PC-3 (cell line): ENCODE measurements at regions of chr10 and their contacts with region 1.

Region 1: GRCh38 chr10:8396675-8397074 is 342.2 kb downstream of the GATA3 start:
- DNase-seq: peak; percentile 31
- ATAC-seq: no peak
- H3K4me3 ChIP-seq: no peak overlapping the region
- H3K27ac ChIP-seq: no peak overlapping the region
- H3K4me1 ChIP-seq: peaks cover 25% of the 10 kb centered on the region
- H3K27me3 ChIP-seq: no peaks in the 10 kb centered on the region
- CTCF ChIP-seq: no peak

Region 2: GRCh38 chr10:8174772-8175171 is 221.9 kb before region 1 on chr10:
- CTCF ChIA-PET with region 1: no interaction called
- POLR2A ChIA-PET with region 1: no interaction called
- intact Hi-C with region 1: no loop called
- DNase-seq: peak; percentile 19
- ATAC-seq: peak; percentile 22; the same call in 1 of the 2 replicates
- H3K4me3 ChIP-seq: no peak overlapping the region
- H3K27ac ChIP-seq: no peak overlapping the region
- H3K4me1 ChIP-seq: no peaks in the 10 kb centered on the region; the same call in 1 of the 2 replicates
- H3K27me3 ChIP-seq: no peaks in the 10 kb centered on the region
- CTCF ChIP-seq: no peak

Region 3: GRCh38 chr10:8187171-8187666 is 209.5 kb before region 1 on chr10:
- CTCF ChIA-PET with region 1: no interaction called
- POLR2A ChIA-PET with region 1: no interaction called
- intact Hi-C with region 1: no loop called
- DNase-seq: no peak
- ATAC-seq: no peak
- H3K4me3 ChIP-seq: no peak overlapping the region
- H3K27ac ChIP-seq: no peak overlapping the region
- H3K4me1 ChIP-seq: no peaks in the 10 kb centered on the region; the same call in 1 of the 2 replicates
- H3K27me3 ChIP-seq: no peaks in the 10 kb centered on the region
- CTCF ChIP-seq: no peak

Region 4: DNA sequence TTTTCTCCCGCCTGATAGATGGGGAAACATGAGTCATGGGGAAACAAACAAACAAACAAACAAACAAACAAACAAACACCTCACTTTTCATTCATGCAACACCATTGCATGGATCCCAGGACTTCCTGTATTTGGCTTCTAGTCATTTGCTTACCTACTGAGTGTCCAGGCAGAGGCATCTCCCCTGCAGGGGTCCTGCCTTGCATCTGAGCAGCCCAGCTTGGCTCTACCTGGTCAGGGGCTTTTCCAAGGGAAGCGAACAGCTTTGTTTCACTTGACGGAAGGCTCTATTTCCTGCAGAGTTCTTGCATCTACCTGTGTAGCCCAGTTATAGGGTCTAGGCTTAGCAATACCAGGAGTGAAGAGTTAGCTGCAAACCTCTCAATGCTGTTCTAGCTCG is 32.0 kb after region 1 on chr10:
- CTCF ChIA-PET with region 1: no interaction called
- POLR2A ChIA-PET with region 1: no interaction called
- intact Hi-C with region 1: loop called (anchors 5 kb)
- DNase-seq: no peak
- ATAC-seq: no peak
- H3K4me3 ChIP-seq: no peak overlapping the region
- H3K27ac ChIP-seq: no peak overlapping the region
- H3K4me1 ChIP-seq: no peaks in the 10 kb centered on the region
- H3K27me3 ChIP-seq: no peaks in the 10 kb centered on the region
- CTCF ChIP-seq: no peak

Region 5: GRCh38 chr10:8463853-8464252 is 67.2 kb after region 1 on chr10:
- CTCF ChIA-PET with region 1: no interaction called
- POLR2A ChIA-PET with region 1: no interaction called
- intact Hi-C with region 1: no loop called
- DNase-seq: no peak
- ATAC-seq: no peak
- H3K4me3 ChIP-seq: no peak overlapping the region
- H3K27ac ChIP-seq: no peak overlapping the region
- H3K4me1 ChIP-seq: no peaks in the 10 kb centered on the region; the same call in 1 of the 2 replicates
- H3K27me3 ChIP-seq: no peaks in the 10 kb centered on the region
- CTCF ChIP-seq: no peak